Activated naive CD4-positive, alpha-beta T cell treated with anti-CD3 and anti-CD28 coated beads for 36 hours (primary cell): ENCODE measurements at regions of chr12 and their contacts with region 1.

Region 1: GRCh38 chr12:68538726-68539614 is 71.7 kb upstream of the RAP1B start:
- DNase-seq: peak; percentile 73
- H3K4me3 Mint-ChIP-seq: peak overlapping the region; percentile 56
- H3K27ac Mint-ChIP-seq: peak overlapping the region; percentile 79
- H3K4me1 Mint-ChIP-seq: peaks cover 53% of the 10 kb centered on the region
- H3K27me3 Mint-ChIP-seq: no peaks in the 10 kb centered on the region

Region 2: DNA sequence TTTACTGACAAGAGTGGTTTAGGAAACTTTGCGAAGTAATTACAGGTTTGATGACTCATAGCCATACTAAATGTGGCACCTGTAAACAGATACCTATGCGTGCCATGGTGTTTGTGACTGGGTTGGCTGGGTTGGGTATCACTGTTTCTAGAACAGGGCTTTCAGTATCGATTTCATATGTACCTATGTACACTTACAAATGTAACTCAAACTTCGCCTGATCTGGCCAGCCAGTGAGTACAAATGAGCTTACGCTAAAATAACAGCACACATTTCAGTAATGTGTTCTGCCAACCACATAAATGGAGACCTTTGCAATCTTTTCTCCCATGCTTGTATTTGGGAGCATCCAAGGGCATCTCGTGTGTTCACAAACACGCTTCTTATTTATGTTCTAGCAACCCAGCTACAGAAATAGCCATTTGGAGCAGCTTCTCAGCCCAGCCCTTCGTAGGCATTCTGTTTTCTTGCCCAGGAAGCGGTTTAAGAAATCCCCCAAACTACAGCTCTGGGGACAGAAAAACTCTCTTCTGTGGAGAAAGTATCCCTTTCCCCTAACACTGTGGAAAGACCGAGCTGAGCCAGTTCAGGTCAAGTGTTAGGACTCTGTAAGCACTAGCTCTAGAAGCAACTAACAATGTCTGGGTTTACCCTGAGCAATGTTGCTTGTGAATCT is 164.5 kb before region 1 on chr12:
- CTCF ChIA-PET with region 1: no interaction called
- intact Hi-C with region 1: loop called (anchors 2 kb)
- DNase-seq: peak; percentile 77
- H3K4me3 Mint-ChIP-seq: no peak overlapping the region
- H3K27ac Mint-ChIP-seq: peak overlapping the region; percentile 89
- H3K4me1 Mint-ChIP-seq: peaks cover 46% of the 10 kb centered on the region
- H3K27me3 Mint-ChIP-seq: peaks cover 3% of the 10 kb centered on the region

Region 3: GRCh38 chr12:68587448-68587873 is 48.5 kb after region 1 on chr12:
- CTCF ChIA-PET with region 1: no interaction called
- intact Hi-C with region 1: loop called (anchors 2 kb)
- DNase-seq: peak; percentile 81
- H3K4me3 Mint-ChIP-seq: no peak overlapping the region
- H3K27ac Mint-ChIP-seq: peak overlapping the region; percentile 27
- H3K4me1 Mint-ChIP-seq: peaks cover 55% of the 10 kb centered on the region
- H3K27me3 Mint-ChIP-seq: no peaks in the 10 kb centered on the region